ENCODE measurements at regions of chr6 and their contacts with region 1.

Region 1: DNA sequence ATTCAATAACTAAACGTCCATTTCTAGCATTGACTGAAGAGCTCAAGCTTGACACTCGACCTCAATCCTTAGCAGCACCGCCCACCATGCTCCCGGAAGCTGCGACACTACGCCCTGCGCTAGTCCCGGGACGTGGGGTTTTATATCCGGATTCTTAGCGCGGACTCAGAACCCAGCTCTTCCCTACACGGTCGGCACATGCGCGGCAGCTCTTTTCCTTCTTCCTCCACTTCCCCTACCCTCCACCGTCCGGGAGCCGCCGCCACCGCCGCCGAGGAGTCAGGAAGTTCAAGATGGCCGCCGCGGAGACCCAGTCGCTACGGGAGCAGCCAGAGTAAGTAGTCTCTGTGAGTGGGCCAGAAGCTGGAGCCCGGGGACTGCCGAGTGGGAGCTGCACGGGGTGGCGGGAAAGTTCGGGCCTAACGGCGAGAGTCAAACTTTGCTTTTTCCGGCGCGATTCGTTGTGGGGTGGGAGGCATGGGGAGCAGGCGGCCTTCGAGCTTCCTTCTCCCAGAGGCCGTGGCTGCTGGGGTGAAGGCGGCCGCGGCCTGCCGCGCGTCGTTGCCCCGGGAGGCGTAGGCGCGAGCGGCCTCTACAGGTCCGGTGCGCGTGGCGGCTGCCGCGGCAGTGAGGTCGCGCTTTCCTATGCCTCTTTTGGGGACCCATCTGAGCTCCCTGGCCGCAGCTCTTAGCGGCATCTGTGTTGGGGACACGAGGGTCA is 57.6 kb downstream of the FAM217A start:
- DNase-seq: peak; percentile 66 to 91 (median 77)
- ATAC-seq: peak; percentile 69 to 71 (median 70)
- H3K4me3 ChIP-seq: peak overlapping the region; percentile 65 to 93
- H3K4me3 Mint-ChIP-seq: peak overlapping the region; percentile 95 to 99 (median 99)
- H3K27ac ChIP-seq: peak overlapping the region; percentile 98
- H3K27ac Mint-ChIP-seq: peak overlapping the region; percentile 99 to 100
- H3K4me1 ChIP-seq: peaks cover 45 to 46% of the 10 kb centered on the region in 2 experiments
- H3K4me1 Mint-ChIP-seq: peaks cover 61 to 79% (median 67%) of the 10 kb centered on the region in 3 donors
- H3K27me3 ChIP-seq: no peaks in the 10 kb centered on the region
- H3K27me3 Mint-ChIP-seq: no peaks in the 10 kb centered on the region

Region 2: DNA sequence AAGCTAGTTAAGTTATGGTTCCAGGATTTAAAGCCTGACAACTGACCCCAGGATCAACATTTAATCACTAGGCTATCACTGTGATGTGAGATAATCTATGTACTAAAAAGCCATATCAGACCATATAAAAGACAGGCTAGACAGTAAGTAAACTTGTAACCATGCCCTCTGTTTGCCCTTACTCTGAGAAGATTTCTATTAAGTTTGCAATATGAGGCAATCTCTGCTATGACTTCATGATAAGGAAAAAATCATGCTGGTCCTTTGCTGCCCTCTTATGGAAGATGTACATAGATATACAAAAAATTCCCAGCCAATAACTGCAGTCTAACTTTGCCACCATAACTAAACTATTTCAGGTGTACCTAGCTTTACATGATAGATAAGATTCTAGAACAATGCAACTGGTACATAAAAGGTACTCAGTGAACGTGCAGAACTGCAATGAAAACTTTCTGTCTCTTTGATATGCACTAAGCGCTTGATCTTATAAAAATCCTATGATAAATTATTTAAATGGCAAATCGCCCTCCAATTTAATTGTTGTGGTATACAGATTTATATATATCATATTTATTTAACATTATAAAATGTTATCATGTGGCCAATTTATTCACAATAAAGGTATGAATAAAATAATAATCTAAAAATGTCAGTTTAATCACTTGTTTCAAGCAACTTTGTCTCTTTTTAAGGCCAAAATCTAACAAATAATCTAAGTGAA is 12.8 kb before region 1 on chr6:
- CTCF ChIA-PET with region 1: interaction called, 4 to 24 read pairs
- POLR2A ChIA-PET with region 1: interaction called in 1 of 2 experiments, 5 read pairs
- DNase-seq: peak in 8 of 35 experiments; percentile 10 to 73 (median 16)
- ATAC-seq: peak in 3 of 4 experiments; percentile 53 to 77 (median 59)
- H3K4me3 ChIP-seq: no peak overlapping the region
- H3K4me3 Mint-ChIP-seq: no peak overlapping the region
- H3K27ac ChIP-seq: no peak overlapping the region
- H3K27ac Mint-ChIP-seq: peak overlapping the region in 1 of 2 donors; percentile 67
- H3K4me1 ChIP-seq: peaks cover 11 to 30% of the 10 kb centered on the region in 2 experiments
- H3K4me1 Mint-ChIP-seq: peaks cover 55 to 59% (median 56%) of the 10 kb centered on the region in 3 donors
- H3K27me3 ChIP-seq: no peaks in the 10 kb centered on the region
- H3K27me3 Mint-ChIP-seq: no peaks in the 10 kb centered on the region

Region 3: GRCh38 chr6:4059115-4059777 is 38.0 kb after region 1 on chr6:
- CTCF ChIA-PET with region 1: interaction called in 1 of 2 experiments, 4 read pairs
- POLR2A ChIA-PET with region 1: interaction called, 6 to 10 read pairs
- DNase-seq: peak in 30 of 35 experiments; percentile 11 to 55 (median 32)
- ATAC-seq: peak; percentile 73 to 94 (median 91)
- H3K4me3 ChIP-seq: no peak overlapping the region
- H3K4me3 Mint-ChIP-seq: peak overlapping the region; percentile 9 to 44 (median 34)
- H3K27ac ChIP-seq: peak overlapping the region; percentile 48
- H3K27ac Mint-ChIP-seq: peak overlapping the region; percentile 86 to 92
- H3K4me1 ChIP-seq: peaks cover 3 to 5% of the 10 kb centered on the region in 2 experiments
- H3K4me1 Mint-ChIP-seq: peaks cover 23 to 30% (median 23%) of the 10 kb centered on the region in 3 donors
- H3K27me3 ChIP-seq: no peaks in the 10 kb centered on the region
- H3K27me3 Mint-ChIP-seq: no peaks in the 10 kb centered on the region

Region 4: GRCh38 chr6:4078691-4079471 is 57.6 kb after region 1 on chr6 and contains the start of gene FAM217A:
- CTCF ChIA-PET with region 1: no interaction called
- POLR2A ChIA-PET with region 1: no interaction called
- DNase-seq: no peak
- ATAC-seq: no peak
- H3K4me3 ChIP-seq: no peak within 1 kb of the TSS
- H3K4me3 Mint-ChIP-seq: no peak within 1 kb of the TSS
- H3K27ac ChIP-seq: no peak within 1 kb of the TSS
- H3K27ac Mint-ChIP-seq: no peak within 1 kb of the TSS
- H3K4me1 ChIP-seq: no peaks in the 10 kb centered on the region
- H3K4me1 Mint-ChIP-seq: no peaks in the 10 kb centered on the region
- H3K27me3 ChIP-seq: peaks cover 0 to 18% of the 10 kb centered on the region in 2 experiments
- H3K27me3 Mint-ChIP-seq: peaks cover 18 to 19% of the 10 kb centered on the region in 2 donors
- total RNA-seq, gene FAM217A: not detected

Region 5: DNA sequence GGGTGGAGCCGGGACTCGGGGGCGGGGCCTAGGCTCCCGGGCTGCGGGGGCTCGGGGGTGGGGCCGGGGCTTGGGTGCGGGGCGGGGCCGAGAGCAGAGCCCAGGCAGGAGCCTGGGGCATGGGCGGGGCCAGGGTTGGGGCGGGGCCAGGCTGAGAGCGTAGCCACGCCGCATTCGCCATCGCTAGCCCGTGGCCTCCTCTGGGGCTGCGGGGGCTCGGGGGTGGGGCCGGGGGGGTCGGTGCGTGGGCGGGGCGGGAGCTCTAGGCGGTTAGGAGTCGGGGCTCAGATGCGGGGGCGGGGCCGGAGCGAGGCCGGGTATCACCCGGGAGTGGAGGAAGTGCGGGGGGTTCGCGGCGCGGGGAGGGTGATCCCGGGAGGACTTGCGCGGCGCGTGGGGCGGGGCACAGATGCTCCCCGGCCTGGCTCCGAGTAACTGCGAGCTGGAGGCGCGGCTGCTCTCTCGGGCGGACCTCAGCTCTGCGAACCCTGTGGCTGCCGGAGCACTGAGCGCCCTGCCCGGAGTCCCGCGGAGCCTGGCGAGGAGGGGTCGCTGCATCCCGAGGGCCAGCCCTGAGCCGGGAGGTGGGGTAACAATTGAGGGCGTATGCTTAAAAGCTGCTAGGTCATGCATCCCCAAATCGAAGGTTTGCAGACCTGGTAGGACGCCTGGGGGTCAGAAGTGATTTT is 114.5 kb after region 1 on chr6:
- CTCF ChIA-PET with region 1: interaction called in 1 of 2 experiments, 21 read pairs
- POLR2A ChIA-PET with region 1: interaction called in 1 of 2 experiments, 13 read pairs
- DNase-seq: peak; percentile 78 to 97 (median 91)
- ATAC-seq: peak; percentile 87 to 92 (median 90)
- H3K4me3 ChIP-seq: peak overlapping the region; percentile 58 to 74
- H3K4me3 Mint-ChIP-seq: peak overlapping the region; percentile 80 to 91 (median 86)
- H3K27ac ChIP-seq: peak overlapping the region; percentile 27
- H3K27ac Mint-ChIP-seq: peak overlapping the region; percentile 82 to 89
- H3K4me1 ChIP-seq: peaks cover 12 to 17% of the 10 kb centered on the region in 2 experiments
- H3K4me1 Mint-ChIP-seq: peaks cover 38 to 48% (median 44%) of the 10 kb centered on the region in 3 donors
- H3K27me3 ChIP-seq: no peaks in the 10 kb centered on the region
- H3K27me3 Mint-ChIP-seq: no peaks in the 10 kb centered on the region